Naive thymus-derived CD8-positive, alpha-beta T cell (primary cell): ENCODE measurements at regions of chr1 and their contacts with region 1.

Region 1: DNA sequence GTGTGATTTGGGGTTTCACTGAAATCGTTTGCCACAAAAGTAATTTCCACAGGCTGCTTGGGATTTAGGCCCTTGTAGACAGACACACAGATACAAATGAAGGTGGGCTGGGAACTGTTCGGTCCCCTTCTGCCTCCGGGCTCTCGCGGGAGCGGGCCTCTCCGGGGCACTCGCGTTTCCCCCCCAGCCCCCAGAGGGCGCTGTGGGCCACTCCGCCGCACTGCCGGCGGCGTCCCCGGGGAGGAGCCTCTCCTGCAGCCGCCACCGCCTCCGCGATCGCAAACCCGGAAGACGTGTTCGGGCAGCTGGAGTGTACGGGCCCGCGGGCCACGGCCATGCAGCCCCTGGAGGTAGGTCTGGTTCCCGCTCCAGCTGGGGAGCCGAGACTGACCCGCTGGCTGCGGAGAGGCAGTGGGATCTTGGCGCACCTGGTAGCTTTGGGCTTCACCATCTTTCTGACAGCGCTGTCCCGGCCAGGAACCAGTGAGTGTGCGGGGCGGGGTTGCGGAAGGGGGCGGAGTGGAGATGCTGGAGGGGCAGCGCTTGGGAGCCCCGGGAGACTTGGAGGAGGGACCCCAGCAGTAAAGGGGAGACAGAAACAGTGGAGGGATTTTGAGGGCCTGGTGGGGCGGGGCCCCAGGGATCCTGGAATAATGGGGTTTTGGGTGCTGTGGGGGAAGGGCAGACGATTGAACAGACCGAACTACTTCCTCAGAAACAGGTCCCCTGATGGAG is at the start of gene CYB561D1:
- DNase-seq: peak; percentile 82 to 97 (median 91)
- ATAC-seq: peak; percentile 86 to 90
- H3K4me3 Mint-ChIP-seq: peak within 1 kb of the TSS; percentile 92 to 99 (median 96)
- H3K27ac Mint-ChIP-seq: peak within 1 kb of the TSS; percentile 78 to 97 (median 91)
- H3K4me1 Mint-ChIP-seq: peaks cover 30 to 61% (median 58%) of the 10 kb centered on the region in 4 donors
- H3K27me3 Mint-ChIP-seq: no peaks in the 10 kb centered on the region
- polyA plus RNA-seq, gene CYB561D1: 12.4 to 20.2 (median 13.9) TPM

Region 2: DNA sequence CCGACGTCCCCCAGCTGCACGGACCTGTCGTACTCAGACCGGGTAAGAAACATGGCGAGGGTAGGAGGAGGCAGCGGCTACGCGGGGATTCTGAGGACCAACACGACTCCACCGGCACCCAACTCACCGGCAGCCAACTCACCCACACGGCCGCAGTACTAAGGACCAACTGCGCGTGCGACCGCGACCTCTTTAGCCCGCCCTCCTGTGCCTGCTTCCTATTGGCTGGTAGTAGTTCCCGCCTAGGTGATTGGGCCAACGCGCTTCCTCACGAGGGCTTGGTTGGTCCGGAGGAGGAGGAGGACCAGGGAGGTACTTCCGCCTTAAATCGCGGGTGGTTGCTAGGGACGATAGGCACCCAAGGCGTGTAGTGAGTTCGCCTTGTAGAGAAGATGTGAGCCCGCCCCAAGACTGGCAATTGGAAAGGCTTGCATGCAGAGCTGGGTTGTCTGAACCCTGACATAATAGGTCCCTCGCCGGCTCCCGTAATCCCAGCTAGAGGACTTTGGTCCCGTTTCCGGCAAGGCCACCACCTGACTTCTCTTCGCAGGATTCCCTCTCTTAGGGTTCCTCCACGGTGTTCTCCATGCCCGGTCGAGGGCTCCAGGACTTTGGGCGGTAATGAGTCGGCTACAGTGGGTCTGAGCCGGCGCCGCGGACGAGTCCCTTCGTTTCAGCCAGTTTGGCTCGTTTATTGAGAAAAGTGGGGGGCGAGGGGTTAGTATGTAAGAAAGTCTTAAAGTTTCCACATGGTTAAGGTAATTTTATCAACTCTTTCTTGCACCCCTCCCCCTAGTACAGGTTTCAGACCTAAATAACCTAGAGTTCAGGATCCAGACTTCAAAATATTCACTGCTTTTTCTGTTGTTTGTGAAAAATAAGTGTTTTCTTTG is 67.4 kb before region 1 on chr1 and contains the start of gene PSMA5:
- POLR2A ChIA-PET with region 1: interaction called, 11 read pairs
- DNase-seq: peak; percentile 78 to 98 (median 94)
- ATAC-seq: peak; percentile 91 to 92
- H3K4me3 Mint-ChIP-seq: peak within 1 kb of the TSS; percentile 94 to 99 (median 97)
- H3K27ac Mint-ChIP-seq: peak within 1 kb of the TSS; percentile 77 to 99 (median 98)
- H3K4me1 Mint-ChIP-seq: peaks cover 24 to 43% (median 40%) of the 10 kb centered on the region in 4 donors
- H3K27me3 Mint-ChIP-seq: no peaks in the 10 kb centered on the region
- polyA plus RNA-seq, gene PSMA5: 73.8 to 93.9 (median 84.6) TPM

Region 3: DNA sequence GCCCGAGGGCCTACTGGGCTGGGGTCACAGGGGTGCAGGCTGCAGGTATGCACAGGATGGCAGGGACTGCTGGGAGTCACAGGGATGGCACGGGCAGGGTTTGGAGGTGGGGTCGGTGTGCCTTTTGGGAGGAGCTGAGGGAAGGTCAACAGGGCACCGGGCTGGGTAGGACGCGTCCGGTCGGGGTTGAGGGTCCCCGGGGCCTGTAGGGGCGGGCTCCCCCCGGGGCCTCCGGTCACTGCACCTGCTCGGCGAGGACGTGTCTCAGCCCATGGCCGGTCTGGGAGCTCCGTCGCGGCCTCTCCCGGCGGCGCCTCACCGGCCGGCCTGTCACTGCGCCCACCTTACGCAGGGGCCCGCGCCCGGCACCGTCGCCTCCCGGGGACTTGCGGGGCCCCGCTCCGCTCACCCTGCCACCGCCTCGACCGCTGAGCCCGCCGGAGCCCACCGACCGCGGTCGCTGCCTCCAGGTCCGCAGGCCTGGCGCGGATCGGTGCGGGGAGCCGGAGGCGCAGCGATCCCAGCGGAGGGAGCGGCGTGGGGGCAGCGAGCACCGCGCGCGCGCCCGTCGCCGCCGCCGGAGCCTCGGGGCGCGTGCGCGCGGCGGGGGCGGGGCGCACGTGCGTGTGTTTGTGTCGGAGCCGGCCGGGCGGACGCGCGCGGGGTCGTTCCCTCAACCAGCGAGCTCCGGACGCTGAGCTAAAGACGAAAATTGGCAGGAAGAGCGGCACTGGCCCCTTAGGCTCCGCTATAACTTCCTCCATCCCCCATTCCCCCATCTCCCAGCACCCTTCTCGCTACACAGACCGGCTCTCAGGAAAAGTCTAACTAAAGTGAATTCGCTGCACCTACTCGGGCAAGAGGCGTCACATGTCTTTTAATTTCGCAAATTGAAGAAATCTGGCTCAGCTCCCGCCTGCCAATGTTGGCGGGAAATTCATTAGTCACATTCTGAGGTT is 15.5 kb after region 1 on chr1 and contains the start of gene AMIGO1:
- POLR2A ChIA-PET with region 1: interaction called, 337 read pairs
- DNase-seq: peak; percentile 46 to 79 (median 68)
- ATAC-seq: peak; percentile 68 to 78
- H3K4me3 Mint-ChIP-seq: peak within 1 kb of the TSS; percentile 90 to 98 (median 96)
- H3K27ac Mint-ChIP-seq: peak within 1 kb of the TSS; percentile 94 to 99 (median 97)
- H3K4me1 Mint-ChIP-seq: peaks cover 38 to 73% (median 68%) of the 10 kb centered on the region in 4 donors
- H3K27me3 Mint-ChIP-seq: no peaks in the 10 kb centered on the region
- polyA plus RNA-seq, gene AMIGO1: 17.8 to 42.2 (median 25.4) TPM

Region 4: GRCh38 chr1:109532365-109533136 is 38.6 kb after region 1 on chr1:
- POLR2A ChIA-PET with region 1: interaction called, 462 read pairs
- DNase-seq: peak; percentile 80 to 97 (median 90)
- ATAC-seq: peak; percentile 85 to 91
- H3K4me3 Mint-ChIP-seq: peak overlapping the region; percentile 69 to 89 (median 85)
- H3K27ac Mint-ChIP-seq: peak overlapping the region; percentile 74 to 96 (median 93)
- H3K4me1 Mint-ChIP-seq: peaks cover 23 to 45% (median 33%) of the 10 kb centered on the region in 4 donors
- H3K27me3 Mint-ChIP-seq: no peaks in the 10 kb centered on the region